ENCODE measurements at regions of chr5 and their contacts with region 1.

Region 1: GRCh38 chr5:151651997-151652645 is 34.6 kb downstream of the SPARC start:
- DNase-seq: peak; percentile 56 to 73 (median 68)
- H3K4me3 ChIP-seq: no peak overlapping the region
- H3K4me3 Mint-ChIP-seq: no peak overlapping the region
- H3K27ac ChIP-seq: no peak overlapping the region
- H3K27ac Mint-ChIP-seq: no peak overlapping the region
- H3K4me1 ChIP-seq: no peaks in the 10 kb centered on the region
- H3K4me1 Mint-ChIP-seq: peaks cover 0 to 2% (median 0%) of the 10 kb centered on the region in 4 donors
- H3K27me3 ChIP-seq: no peaks in the 10 kb centered on the region
- H3K27me3 Mint-ChIP-seq: peaks cover 0 to 8% of the 10 kb centered on the region in 2 donors

Region 2: GRCh38 chr5:151447174-151448037 is 204.7 kb before region 1 on chr5 and contains the start of gene SLC36A1:
- CTCF ChIA-PET with region 1: interaction called, 99 read pairs
- POLR2A ChIA-PET with region 1: interaction called, 12 read pairs
- intact Hi-C with region 1: loop called (anchors 1 kb)
- DNase-seq: peak; percentile 85 to 89 (median 86)
- H3K4me3 ChIP-seq: peak within 1 kb of the TSS; percentile 48 to 97
- H3K4me3 Mint-ChIP-seq: peak within 1 kb of the TSS; percentile 92 to 99 (median 98)
- H3K27ac ChIP-seq: peak within 1 kb of the TSS; percentile 64
- H3K27ac Mint-ChIP-seq: peak within 1 kb of the TSS; percentile 80 to 97 (median 95)
- H3K4me1 ChIP-seq: peaks cover 23% of the 10 kb centered on the region
- H3K4me1 Mint-ChIP-seq: peaks cover 12 to 27% (median 15%) of the 10 kb centered on the region in 4 donors
- H3K27me3 ChIP-seq: peaks cover 3% of the 10 kb centered on the region
- H3K27me3 Mint-ChIP-seq: peaks cover 9 to 16% of the 10 kb centered on the region in 2 donors
- total RNA-seq, gene SLC36A1: 5.2 to 7.8 TPM

Region 3: GRCh38 chr5:151499501-151500035 is 152.6 kb before region 1 on chr5:
- CTCF ChIA-PET with region 1: interaction called, 6 read pairs
- POLR2A ChIA-PET with region 1: no interaction called
- intact Hi-C with region 1: loop called (anchors 2 kb)
- DNase-seq: no peak
- H3K4me3 ChIP-seq: no peak overlapping the region
- H3K4me3 Mint-ChIP-seq: no peak overlapping the region
- H3K27ac ChIP-seq: no peak overlapping the region
- H3K27ac Mint-ChIP-seq: no peak overlapping the region
- H3K4me1 ChIP-seq: peaks cover 7% of the 10 kb centered on the region
- H3K4me1 Mint-ChIP-seq: peaks cover 4 to 7% (median 5%) of the 10 kb centered on the region in 4 donors
- H3K27me3 ChIP-seq: no peaks in the 10 kb centered on the region
- H3K27me3 Mint-ChIP-seq: no peaks in the 10 kb centered on the region

Region 4: DNA sequence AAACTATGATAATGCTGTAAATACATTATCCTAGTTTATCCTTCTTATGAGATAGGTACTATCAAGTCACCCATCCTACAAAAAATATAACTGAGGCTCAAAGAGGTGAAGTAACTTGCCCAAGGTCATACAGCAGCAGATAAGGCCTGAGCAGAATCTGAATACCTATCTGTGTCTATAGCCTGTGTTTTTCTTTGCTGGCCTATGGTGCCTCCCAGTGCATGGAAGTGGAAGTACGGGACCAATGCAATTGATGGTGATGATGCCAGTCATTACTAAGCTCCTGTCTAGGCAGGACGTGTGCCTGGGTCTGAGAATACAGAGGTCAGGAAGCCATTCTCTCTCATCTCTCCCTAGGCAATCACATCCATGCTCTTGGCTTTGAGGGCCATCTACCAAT is 128.8 kb before region 1 on chr5:
- CTCF ChIA-PET with region 1: interaction called, 10 read pairs
- POLR2A ChIA-PET with region 1: no interaction called
- intact Hi-C with region 1: loop called (anchors 5 kb)
- DNase-seq: peak in 4 of 5 donors; percentile 8 to 35 (median 23)
- H3K4me3 ChIP-seq: no peak overlapping the region
- H3K4me3 Mint-ChIP-seq: no peak overlapping the region
- H3K27ac ChIP-seq: no peak overlapping the region
- H3K27ac Mint-ChIP-seq: no peak overlapping the region
- H3K4me1 ChIP-seq: no peaks in the 10 kb centered on the region
- H3K4me1 Mint-ChIP-seq: peaks cover 0 to 8% (median 0%) of the 10 kb centered on the region in 4 donors
- H3K27me3 ChIP-seq: no peaks in the 10 kb centered on the region
- H3K27me3 Mint-ChIP-seq: no peaks in the 10 kb centered on the region

Region 5: GRCh38 chr5:151612689-151613427 is 39.3 kb before region 1 on chr5:
- CTCF ChIA-PET with region 1: interaction called, 24 read pairs
- POLR2A ChIA-PET with region 1: no interaction called
- intact Hi-C with region 1: no loop called
- DNase-seq: peak; percentile 55 to 63 (median 56)
- H3K4me3 ChIP-seq: peak overlapping the region in 1 of 2 donors; percentile 25
- H3K4me3 Mint-ChIP-seq: peak overlapping the region in 7 of 8 donors; percentile 60 to 79 (median 70)
- H3K27ac ChIP-seq: no peak overlapping the region
- H3K27ac Mint-ChIP-seq: peak overlapping the region in 6 of 7 donors; percentile 50 to 98 (median 86)
- H3K4me1 ChIP-seq: peaks cover 44% of the 10 kb centered on the region
- H3K4me1 Mint-ChIP-seq: peaks cover 21 to 55% (median 43%) of the 10 kb centered on the region in 4 donors
- H3K27me3 ChIP-seq: no peaks in the 10 kb centered on the region
- H3K27me3 Mint-ChIP-seq: peaks cover 5 to 6% of the 10 kb centered on the region in 2 donors

Region 6: DNA sequence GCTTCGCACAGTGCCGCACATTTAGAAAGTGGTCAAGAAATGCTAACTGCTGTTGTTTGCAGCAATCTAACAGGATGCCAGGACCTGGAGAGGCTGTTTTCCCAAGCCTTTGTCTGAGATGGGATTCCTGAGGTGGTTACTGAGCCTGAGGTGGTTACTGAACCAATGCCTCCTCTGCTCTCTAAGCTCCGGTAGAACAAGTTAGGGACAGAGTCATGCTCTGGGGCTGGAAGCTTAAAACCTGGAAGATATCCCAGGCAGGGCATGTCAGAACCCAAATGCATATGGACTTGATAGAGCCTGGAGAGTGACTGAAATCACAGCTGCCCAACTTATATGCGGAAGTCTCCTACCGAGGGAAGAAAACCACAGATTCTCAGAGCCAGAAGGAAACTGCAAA is 14.4 kb before region 1 on chr5:
- CTCF ChIA-PET with region 1: interaction called, 20 read pairs
- POLR2A ChIA-PET with region 1: no interaction called
- intact Hi-C with region 1: no loop called
- DNase-seq: no peak
- H3K4me3 ChIP-seq: no peak overlapping the region
- H3K4me3 Mint-ChIP-seq: no peak overlapping the region
- H3K27ac ChIP-seq: no peak overlapping the region
- H3K27ac Mint-ChIP-seq: no peak overlapping the region
- H3K4me1 ChIP-seq: peaks cover 9% of the 10 kb centered on the region
- H3K4me1 Mint-ChIP-seq: peaks cover 0 to 13% (median 4%) of the 10 kb centered on the region in 4 donors
- H3K27me3 ChIP-seq: no peaks in the 10 kb centered on the region
- H3K27me3 Mint-ChIP-seq: peaks cover 0 to 3% of the 10 kb centered on the region in 2 donors

Region 7: DNA sequence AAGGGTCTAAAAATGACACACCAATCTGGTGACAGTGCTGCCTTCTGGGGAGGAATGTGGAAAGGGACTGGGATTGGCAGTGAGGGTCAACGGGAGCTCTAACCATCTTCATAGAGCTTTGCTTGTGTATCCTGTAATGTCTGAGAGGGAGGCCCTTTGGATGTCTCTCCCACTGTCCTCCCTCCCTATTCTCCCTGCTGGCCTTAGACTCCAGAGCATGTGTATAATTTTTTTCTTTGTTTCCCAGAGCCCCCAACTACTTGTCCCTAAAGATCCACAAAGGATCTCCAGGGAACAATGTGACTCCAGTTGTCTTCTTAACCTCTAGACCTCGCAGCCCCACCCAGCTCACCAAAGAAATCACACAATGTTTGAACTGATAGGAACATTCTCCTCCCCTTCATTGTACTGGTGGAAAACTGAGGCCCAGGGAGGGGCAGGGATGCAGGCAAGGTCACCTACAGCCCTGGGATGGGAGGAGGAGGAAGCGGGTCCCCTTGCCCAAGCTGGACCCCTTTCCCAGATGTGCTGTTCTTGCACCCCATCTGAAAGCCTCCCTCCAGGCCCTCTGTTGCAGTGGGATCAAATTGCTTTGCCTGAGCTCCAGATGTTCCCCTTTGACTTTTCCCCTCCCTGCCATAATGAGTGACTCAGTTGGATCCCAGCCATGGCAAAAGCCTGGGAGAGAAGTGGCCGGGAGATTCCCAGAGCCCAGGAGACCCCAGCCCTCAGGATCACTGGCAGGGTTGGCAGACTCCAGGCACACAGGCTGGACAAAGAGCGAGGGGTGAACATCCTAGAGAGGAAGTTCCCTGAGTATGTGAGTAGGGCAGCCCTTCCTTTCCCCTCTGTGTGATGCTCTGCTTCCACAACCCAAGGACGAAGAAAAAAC is 12.8 kb after region 1 on chr5:
- CTCF ChIA-PET with region 1: interaction called, 30 read pairs
- POLR2A ChIA-PET with region 1: no interaction called
- intact Hi-C with region 1: no loop called
- DNase-seq: no peak
- H3K4me3 ChIP-seq: no peak overlapping the region
- H3K4me3 Mint-ChIP-seq: no peak overlapping the region
- H3K27ac ChIP-seq: no peak overlapping the region
- H3K27ac Mint-ChIP-seq: no peak overlapping the region
- H3K4me1 ChIP-seq: peaks cover 4% of the 10 kb centered on the region
- H3K4me1 Mint-ChIP-seq: peaks cover 3 to 14% (median 5%) of the 10 kb centered on the region in 4 donors
- H3K27me3 ChIP-seq: no peaks in the 10 kb centered on the region
- H3K27me3 Mint-ChIP-seq: peaks cover 0 to 2% of the 10 kb centered on the region in 2 donors

Measured in CD4-positive, alpha-beta memory T cell (primary cell).